ENCODE measurements at regions of chr10 and their contacts with region 1.

Region 1: DNA sequence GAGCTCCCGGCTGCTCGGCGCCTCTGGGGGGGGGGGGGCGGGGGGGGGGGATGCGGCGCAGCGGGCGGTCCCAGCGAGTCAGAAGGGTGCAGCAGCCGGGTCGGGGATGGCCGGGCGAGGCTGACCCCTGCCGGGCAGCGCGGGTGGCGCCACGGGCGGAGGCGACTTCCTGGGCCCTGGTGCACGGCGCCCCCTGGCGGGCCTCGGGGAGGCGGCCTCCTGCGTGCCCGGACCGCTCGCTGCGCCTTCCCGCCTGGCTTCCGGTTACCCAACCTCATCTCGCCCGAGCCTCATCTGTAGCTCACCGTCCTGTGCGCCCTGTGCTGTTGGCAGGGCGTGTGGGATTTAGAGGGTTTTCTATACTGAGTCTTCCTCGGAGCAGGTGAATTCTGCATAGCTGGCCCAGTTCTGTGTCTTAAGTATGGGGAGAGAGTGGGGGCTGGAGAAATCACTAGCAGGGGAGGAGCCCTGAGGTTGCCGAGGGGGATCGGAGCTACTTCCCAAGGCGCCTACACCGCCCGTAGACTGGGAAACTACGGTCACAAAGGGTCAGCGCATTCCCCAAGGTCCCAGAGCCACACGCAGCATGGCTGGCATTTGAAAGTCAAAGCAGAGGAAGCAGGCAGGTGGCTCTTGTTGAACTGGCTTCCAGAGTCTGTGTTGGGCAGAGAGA is 28.3 kb upstream of the WDFY4 start:
- DNase-seq: peak; percentile 91 to 97 (median 93)
- ATAC-seq: peak; percentile 61 to 93 (median 89)
- H3K4me3 ChIP-seq: peak overlapping the region; percentile 9 to 74 (median 62)
- H3K27ac ChIP-seq: peak overlapping the region in 7 of 12 donors; percentile 11 to 87 (median 73)
- H3K4me1 ChIP-seq: peaks cover 0 to 32% (median 12%) of the 10 kb centered on the region in 12 donors
- H3K27me3 ChIP-seq: no peaks in the 10 kb centered on the region
- CTCF ChIP-seq: peak; percentile 89 to 99 (median 98)
- POLR2A ChIP-seq: peak in 1 of 2 donors; percentile 8

Region 2: DNA sequence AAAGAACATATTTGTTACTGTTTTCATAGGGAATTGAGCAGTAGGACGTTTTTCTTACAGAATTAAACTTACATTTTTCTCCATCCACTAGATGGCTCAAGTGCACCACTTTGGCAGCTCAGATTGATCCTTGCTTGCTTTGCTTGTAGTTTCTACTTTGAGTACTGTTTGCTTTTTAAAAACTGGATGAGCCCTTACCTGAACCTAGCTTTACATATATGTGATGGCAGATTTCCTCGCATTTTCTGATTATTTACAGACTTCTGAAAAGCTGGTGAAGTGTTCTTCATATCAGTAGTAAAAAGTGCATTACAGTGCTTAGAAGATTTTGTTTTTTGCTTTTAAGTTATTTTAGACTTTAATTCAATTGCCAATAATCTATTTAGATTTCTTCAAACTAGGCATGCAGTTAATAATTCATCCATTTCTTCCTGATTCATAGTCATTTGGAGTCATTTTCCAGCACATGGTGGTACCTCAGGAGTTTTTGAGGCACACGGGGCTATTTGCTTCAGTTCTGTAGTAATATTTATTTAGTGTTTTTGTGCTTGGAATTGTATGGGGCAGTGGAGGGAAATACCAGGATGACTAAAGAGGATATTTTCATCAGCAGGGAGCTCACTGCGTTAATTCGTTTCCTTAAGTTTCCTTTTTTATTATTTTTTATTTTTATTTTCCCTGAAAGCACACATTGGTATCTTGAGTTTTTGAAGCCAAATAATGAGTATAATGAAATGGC is 292.6 kb before region 1 on chr10:
- intact Hi-C with region 1: loop called in 9 of 10 experiments (anchors 1 to 5 kb)
- DNase-seq: peak in 3 of 5 donors; percentile 24 to 28 (median 25)
- ATAC-seq: peak in 3 of 4 donors; percentile 66 to 81 (median 80)
- H3K4me3 ChIP-seq: no peak overlapping the region
- H3K27ac ChIP-seq: peak overlapping the region in 4 of 12 donors; percentile 2 to 51 (median 50)
- H3K4me1 ChIP-seq: peaks cover 4 to 55% (median 37%) of the 10 kb centered on the region in 12 donors
- H3K27me3 ChIP-seq: no peaks in the 10 kb centered on the region
- CTCF ChIP-seq: peak; percentile 51 to 84 (median 73)
- POLR2A ChIP-seq: no peak

Region 3: GRCh38 chr10:48551861-48552591 is 104.4 kb before region 1 on chr10:
- intact Hi-C with region 1: loop called (anchors 1 to 2 kb)
- DNase-seq: peak in 4 of 5 donors; percentile 37 to 49 (median 43)
- ATAC-seq: peak; percentile 38 to 72 (median 60)
- H3K4me3 ChIP-seq: no peak overlapping the region
- H3K27ac ChIP-seq: no peak overlapping the region
- H3K4me1 ChIP-seq: peaks cover 0 to 24% (median 10%) of the 10 kb centered on the region in 12 donors
- H3K27me3 ChIP-seq: no peaks in the 10 kb centered on the region
- CTCF ChIP-seq: peak; percentile 61 to 84 (median 72)
- POLR2A ChIP-seq: no peak

Region 4: DNA sequence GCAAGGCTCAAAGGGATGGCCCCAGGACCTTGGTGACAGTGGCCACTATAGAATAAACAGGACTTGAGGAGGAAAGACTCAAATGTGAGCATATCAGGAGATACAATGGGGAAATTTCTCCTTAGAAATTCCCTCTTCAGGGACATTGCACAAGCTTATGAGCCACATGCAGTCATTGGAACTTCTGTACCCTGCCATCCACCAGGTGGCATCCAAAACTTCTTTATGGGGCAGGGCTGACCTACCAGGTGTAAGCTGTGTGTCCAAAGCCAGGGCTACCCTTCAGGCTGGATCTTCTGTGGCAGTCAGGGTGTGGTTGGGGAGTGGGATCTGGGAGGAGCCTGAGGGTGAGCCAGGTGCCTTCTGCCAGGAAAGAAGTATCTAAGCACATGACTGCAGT is 319.8 kb after region 1 on chr10:
- intact Hi-C with region 1: loop called (anchors 2 to 10 kb)
- DNase-seq: peak in 1 of 5 donors; percentile 38
- ATAC-seq: peak in 3 of 4 donors; percentile 67 to 73 (median 70)
- H3K4me3 ChIP-seq: no peak overlapping the region
- H3K27ac ChIP-seq: no peak overlapping the region
- H3K4me1 ChIP-seq: peaks cover 0 to 1% (median 0%) of the 10 kb centered on the region in 12 donors
- H3K27me3 ChIP-seq: no peaks in the 10 kb centered on the region
- CTCF ChIP-seq: peak in 10 of 12 donors; percentile 20 to 53 (median 38)
- POLR2A ChIP-seq: no peak

Region 5: DNA sequence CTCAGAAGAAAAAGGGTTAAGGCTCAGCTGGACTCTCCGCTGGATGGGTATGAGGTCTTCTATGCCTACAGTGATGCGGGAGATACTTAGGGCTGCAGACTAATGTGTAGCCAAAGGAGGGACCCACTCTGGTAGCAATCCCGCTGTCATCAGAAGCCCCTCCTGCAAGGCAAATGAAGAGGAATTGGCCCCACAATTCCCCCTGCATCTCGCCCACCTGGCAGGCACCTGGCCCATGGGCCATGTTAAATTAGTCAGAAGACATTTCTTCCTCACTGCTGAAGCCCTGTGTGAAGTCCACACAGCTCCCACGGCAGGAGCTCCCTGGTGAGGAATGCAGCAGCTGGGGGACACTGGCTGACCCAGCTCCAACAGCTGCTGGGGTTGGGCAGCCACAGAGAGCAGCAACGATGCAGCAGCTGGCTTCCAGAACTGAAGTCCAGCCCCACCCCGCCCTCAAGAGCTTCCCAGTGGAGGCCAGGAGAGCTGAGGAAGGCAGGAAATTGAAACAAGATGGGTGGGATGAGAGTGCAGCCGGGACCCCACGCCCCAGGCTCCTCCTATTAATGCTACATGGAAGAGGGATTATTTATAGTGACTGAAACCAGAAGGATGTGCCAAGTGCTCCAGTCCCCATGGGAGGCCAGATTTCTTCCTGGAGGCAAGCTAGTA is 453.4 kb after region 1 on chr10:
- intact Hi-C with region 1: loop called in 1 of 10 experiments (anchors 5 kb)
- DNase-seq: peak; percentile 81 to 91 (median 86)
- ATAC-seq: peak; percentile 76 to 88 (median 81)
- H3K4me3 ChIP-seq: peak overlapping the region in 4 of 12 donors; percentile 7 to 33 (median 22)
- H3K27ac ChIP-seq: peak overlapping the region in 9 of 12 donors; percentile 6 to 72 (median 53)
- H3K4me1 ChIP-seq: peaks cover 7 to 100% (median 68%) of the 10 kb centered on the region in 12 donors
- H3K27me3 ChIP-seq: no peaks in the 10 kb centered on the region
- CTCF ChIP-seq: no peak
- POLR2A ChIP-seq: no peak

Region 6: DNA sequence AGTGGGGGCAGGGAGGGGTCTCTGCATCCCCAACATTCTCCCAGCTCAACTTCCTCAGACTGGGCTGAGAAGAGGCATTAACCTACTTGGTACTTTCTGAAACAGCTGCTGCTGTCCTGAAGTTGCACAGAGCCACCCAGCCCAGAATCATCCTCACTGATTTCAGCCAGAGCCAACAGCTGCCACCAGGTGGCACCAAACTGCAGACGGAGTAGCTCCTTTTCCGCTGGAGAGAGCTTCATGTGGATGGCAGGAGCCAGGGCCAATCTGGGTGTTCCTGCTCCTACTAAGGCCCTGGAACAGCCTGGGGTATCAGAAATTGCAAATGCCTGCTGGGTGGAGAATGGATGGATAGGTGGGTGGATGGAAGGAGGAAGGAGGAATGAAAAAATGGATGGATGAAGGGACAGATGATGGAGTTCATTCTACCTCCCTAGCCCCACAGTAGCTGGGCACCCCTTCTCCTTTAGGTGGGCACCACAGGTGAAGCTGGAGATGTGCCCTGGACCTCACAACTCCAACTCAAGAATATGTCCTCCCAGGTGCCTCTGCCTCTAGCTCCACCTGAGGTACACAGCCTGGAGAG is 751.3 kb after region 1 on chr10:
- intact Hi-C with region 1: loop called in 1 of 10 experiments (anchors 10 kb)
- DNase-seq: peak; percentile 67 to 88 (median 76)
- ATAC-seq: peak; percentile 44 to 86 (median 71)
- H3K4me3 ChIP-seq: no peak overlapping the region
- H3K27ac ChIP-seq: no peak overlapping the region
- H3K4me1 ChIP-seq: peaks cover 0 to 28% (median 5%) of the 10 kb centered on the region in 12 donors
- H3K27me3 ChIP-seq: peaks cover 0 to 32% (median 9%) of the 10 kb centered on the region in 9 donors
- CTCF ChIP-seq: peak; percentile 74 to 90 (median 87)
- POLR2A ChIP-seq: no peak

Region 7: GRCh38 chr10:49518982-49519578 is 862.7 kb after region 1 on chr10:
- intact Hi-C with region 1: loop called in 8 of 10 experiments (anchors 2 to 10 kb)
- DNase-seq: peak in 1 of 5 donors; percentile 13
- ATAC-seq: peak; percentile 52 to 73 (median 62)
- H3K4me3 ChIP-seq: no peak overlapping the region
- H3K27ac ChIP-seq: no peak overlapping the region
- H3K4me1 ChIP-seq: peaks cover 0 to 33% (median 7%) of the 10 kb centered on the region in 12 donors
- H3K27me3 ChIP-seq: no peaks in the 10 kb centered on the region
- CTCF ChIP-seq: peak; percentile 55 to 74 (median 66)
- POLR2A ChIP-seq: no peak